Left colon (tissue), 2 donors: ENCODE measurements at regions of chr15 and their contacts with region 1.

Region 1: DNA sequence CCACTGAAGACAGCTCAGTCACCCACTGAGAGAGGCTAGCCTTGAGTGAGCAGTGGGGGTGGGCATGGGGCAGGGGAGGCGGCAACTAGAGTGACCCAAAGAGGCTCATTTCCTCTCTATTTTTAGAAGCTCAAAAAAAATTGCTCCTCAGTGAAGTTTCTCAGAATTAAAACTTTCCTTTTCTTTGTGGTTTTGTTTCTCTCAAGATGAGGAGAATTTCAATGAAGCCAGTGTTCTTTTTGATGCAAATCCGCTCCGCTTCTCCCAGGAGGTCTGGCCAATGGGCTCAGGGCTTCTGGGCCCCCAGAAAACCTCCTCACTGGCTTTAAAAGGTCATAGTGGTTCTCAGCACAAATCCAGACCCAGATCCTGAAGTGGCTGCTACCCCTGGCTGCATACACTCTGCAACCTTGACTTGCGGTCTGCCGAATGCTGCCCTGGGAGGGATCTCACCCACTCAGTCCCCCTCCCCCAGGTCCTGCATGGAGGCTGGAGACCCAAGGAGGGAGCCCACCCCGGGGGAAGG is at the start of gene ACSBG1:
- DNase-seq: no peak
- ATAC-seq: no peak
- total RNA-seq, gene ACSBG1: 0.45 to 0.58 TPM

Region 2: DNA sequence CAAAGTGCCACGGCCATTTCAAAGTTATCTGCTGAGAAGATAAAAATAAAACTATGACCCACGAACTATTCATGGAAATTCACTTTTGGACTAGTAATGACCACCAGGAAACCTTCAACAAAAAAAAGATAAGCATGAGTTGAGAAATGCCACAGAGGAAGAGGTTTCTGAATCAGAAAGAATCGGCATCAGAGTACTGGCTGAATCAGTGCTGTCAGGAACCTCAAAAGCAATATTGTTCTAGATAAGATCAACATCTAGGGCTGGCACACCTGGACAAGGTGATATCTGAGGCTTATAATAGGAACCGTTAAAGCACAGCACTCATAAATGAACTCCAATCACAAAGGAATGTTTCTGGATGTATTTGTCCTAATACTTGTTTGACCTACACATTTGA is 887.4 kb before region 1 on chr15:
- intact Hi-C with region 1: no loop called
- DNase-seq: no peak
- ATAC-seq: no peak

Region 3: GRCh38 chr15:77966540-77967290 is 267.9 kb before region 1 on chr15:
- intact Hi-C with region 1: loop called in 1 of 2 experiments (anchors 10 kb)
- DNase-seq: no peak
- ATAC-seq: peak; percentile 88

Region 4: DNA sequence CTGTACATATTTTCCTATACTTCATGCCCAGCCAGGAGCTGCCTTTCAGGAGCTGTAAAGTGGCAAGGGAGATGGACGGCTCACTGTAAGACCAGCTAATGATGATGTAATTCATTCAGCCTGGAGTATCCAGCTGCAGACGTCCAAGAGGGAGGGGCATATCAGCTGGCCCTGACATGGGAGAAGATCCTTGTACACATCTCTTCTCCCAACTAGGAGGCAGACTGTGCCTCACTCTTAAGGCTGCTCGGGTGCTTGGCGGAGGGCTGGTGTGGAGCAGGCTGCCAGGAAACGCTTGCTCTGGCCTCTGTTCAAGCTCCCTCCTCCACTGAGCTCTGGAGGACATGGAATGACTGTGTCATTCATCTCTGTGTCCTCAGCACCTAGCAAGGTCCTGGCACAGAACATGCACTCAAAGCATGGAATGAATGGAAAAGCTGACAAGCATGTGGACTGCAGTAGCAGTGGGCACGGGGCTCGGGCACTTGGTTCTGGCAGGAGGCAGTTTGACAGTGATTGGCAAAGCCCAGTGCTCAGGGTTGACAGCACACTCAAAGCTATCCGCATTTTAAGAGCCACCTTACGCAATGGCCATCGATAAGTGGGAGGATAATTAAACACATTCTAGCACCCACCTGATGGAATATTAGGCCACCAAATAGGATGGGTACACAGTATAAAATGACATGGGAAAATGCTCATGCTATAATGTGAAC is 229.5 kb before region 1 on chr15:
- intact Hi-C with region 1: no loop called
- DNase-seq: peak in 1 of 2 donors; percentile 77
- ATAC-seq: no peak

Region 5: DNA sequence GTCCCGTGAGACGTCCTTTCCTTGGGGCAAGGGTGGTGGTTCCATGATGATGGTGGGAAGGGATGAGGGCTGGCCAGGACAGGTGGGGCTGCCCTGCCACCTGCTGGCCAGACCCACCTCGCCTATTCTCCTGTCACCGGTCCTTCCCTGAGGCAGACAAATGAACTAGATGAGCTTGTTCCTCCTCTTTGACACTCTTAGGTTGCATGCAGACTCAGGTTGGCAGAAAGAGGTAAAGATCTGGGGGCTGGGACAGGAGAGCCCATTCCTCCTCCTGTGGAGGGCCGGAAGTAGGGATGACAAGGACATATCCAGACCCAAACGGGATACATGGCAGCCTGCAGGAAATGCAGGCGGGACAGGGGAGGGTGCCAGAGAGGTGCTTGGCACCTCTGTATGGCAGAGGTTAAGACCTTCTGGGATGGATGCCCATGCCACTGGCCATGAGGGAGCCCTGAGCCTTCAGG is 38.8 kb before region 1 on chr15:
- intact Hi-C with region 1: no loop called
- DNase-seq: peak; percentile 25 to 52
- ATAC-seq: peak; percentile 96

Region 6: DNA sequence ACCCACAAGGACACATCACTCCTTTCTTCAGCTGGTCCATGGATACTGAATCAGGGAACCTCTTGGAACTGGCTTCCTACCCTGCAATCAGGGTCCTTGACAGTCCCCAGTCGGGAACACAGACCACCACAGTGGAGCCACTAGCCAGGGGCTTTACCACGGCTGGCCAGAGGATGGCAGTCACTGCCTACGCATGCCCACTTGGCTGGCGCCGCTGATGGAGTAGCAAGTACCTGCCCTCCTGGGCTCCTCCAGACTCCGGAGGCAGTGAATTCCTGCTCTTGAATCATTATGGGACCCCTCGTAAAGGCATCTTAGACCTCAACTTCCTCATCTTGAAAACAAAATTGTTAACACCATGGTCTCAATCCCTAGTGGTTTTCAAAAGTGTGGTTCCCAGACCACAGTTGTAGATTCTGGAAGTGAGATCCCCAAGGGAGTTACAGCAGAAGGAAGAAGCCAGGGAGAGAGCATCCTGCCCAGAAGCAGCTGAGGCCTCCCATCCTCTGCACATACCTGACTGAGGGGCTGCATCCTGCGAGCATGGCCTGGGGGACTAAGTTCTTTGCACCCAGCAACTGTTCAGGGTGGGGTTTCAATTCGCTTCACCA is 73.9 kb after region 1 on chr15:
- intact Hi-C with region 1: no loop called
- DNase-seq: peak in 1 of 2 donors; percentile 83
- ATAC-seq: peak; percentile 92